ENCODE measurements at regions of chr15 and their contacts with region 1.

Region 1: DNA sequence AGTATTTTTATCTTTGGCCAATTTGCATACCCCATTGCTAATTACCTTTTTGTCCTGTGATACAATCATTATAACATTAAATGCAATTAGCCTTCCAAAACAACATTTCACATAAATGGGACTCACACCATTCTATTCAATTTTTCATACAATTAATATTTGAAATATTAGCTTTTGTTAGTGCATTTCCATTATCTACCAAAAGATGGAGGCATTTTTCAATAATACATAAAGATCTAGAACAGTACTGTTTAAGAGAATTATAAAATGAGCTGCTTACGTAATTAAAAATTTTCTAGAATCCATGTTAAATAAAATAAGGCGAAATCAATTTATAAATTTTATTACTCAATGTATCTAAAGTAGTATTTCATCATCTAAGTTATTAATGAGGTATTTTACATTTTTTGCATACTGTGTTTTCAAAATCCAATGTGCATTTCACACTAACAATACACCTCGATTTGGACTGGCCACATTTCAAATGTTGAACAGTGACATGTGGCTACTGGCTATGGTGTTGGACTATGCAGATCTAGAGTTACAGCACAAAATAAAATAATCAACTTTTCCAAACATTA is 74.3 kb downstream of the TJP1 start:
- DNase-seq: no peak
- H3K4me3 ChIP-seq: no peak overlapping the region
- H3K27ac ChIP-seq: no peak overlapping the region
- H3K4me1 ChIP-seq: no peaks in the 10 kb centered on the region
- H3K27me3 ChIP-seq: no peaks in the 10 kb centered on the region
- CTCF ChIP-seq: peak; percentile 37 to 42

Region 2: DNA sequence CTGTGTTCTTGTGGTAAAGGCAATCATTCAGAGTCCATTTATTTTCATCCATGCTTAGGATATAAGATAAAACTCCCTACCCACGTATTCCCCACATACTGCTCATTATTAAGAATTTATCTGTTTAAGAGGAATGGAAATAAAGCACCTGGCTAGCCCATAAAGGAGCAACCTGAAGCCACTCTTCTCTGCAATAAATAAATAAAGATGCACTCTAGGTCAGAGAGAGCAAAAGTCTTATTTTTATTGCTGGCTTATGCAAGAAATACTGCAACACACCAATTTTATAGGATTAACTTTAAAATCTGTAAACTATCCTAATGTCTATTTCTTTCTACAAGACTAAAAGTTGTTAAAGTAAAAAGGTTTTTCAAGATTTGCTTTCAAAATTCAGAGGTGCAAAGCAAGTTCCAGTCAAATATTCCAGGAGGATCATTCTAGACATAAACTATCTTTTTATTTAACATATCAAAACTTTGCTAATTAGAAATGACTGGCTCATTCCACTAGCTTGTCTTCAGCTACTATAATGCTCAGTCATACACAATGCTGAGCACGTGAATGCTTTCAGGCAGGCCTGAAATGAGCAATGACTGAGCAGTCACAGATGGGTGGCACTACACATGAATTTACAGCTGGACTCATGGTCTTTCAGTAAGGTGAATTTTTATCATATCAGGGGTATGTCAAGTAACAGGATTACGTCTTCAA is 67.2 kb after region 1 on chr15:
- CTCF ChIA-PET with region 1: no interaction called
- dilution Hi-C with region 1: no loop called
- in situ Hi-C with region 1: no loop called
- intact Hi-C with region 1: loop called (anchors 2 kb)
- DNase-seq: peak; percentile 42
- H3K4me3 ChIP-seq: no peak overlapping the region
- H3K27ac ChIP-seq: no peak overlapping the region
- H3K4me1 ChIP-seq: peaks cover 34% of the 10 kb centered on the region
- H3K27me3 ChIP-seq: no peaks in the 10 kb centered on the region
- CTCF ChIP-seq: no peak

Region 3: DNA sequence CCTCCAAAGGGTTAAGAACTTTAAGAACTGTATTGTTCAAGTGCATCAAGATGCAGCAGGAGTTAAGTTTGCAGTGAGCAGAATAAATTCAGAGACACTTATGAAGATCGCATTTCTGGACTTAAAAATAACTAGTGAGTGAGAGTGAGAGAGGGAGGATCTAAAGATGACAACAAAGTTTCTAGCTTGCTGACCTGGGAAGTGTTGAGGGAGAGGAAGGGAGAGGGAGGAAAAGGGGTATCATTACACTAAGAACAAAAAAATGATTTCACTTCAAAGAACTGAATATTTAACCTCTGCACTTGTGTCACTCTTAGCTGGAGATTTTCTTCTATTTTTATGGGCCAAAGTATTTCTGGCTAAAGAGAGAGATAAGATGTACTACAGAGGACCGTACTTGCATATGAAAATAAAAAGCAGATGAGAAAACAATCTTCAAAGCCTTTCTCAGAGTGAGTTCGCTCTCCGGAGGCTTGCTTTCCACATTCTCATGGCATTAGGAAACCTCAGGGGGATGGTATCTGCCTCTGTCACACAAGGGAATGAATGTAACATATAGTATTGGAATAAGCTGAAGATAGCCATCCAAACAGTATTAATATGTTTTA is 165.7 kb after region 1 on chr15:
- CTCF ChIA-PET with region 1: no interaction called
- dilution Hi-C with region 1: no loop called
- in situ Hi-C with region 1: no loop called
- intact Hi-C with region 1: no loop called
- DNase-seq: no peak
- H3K4me3 ChIP-seq: no peak overlapping the region
- H3K27ac ChIP-seq: no peak overlapping the region
- H3K4me1 ChIP-seq: peaks cover 6% of the 10 kb centered on the region
- H3K27me3 ChIP-seq: no peaks in the 10 kb centered on the region
- CTCF ChIP-seq: no peak